ENCODE measurements at regions of chr3 and their contacts with region 1.

Region 1: DNA sequence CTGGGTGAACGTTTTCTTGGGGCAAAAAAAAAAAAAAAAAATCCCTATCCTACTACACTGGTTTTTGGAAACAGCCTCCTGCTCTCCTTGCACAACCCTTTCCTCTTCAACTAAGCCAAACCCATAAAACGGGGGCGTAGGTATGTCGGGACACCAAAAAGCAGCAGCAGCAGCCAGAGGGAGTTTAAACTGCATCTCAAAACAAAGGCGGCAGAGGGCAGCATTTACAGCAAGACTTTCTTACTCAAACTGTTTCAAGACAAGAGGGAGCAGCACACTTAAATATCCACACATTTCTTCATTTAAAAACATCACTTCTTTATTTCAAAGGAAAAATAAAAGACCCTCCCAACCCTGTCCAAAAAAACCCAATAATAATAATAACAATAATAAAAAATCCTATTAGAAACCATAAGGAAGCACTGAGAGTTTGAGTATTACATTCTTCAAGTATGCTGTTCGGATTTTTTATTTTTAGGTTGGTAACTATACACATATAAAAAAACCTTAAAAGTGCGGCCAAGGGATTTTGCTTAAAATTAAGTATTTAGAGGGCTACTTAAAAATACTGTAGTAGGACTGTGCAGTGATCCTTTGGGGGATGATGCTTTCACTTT is 43.9 kb upstream of the PLXND1 start:
- DNase-seq: peak; percentile 84
- H3K4me3 Mint-ChIP-seq: no peak overlapping the region
- H3K27ac Mint-ChIP-seq: peak overlapping the region; percentile 63
- H3K4me1 Mint-ChIP-seq: peaks cover 42% of the 10 kb centered on the region
- H3K27me3 Mint-ChIP-seq: no peaks in the 10 kb centered on the region
- CTCF ChIP-seq: peak; percentile 83

Region 2: GRCh38 chr3:129732200-129732876 is 82.0 kb after region 1 on chr3:
- CTCF ChIA-PET with region 1: no interaction called
- intact Hi-C with region 1: loop called (anchors 5 kb)
- DNase-seq: no peak
- H3K4me3 Mint-ChIP-seq: no peak overlapping the region
- H3K27ac Mint-ChIP-seq: peak overlapping the region; percentile 5
- H3K4me1 Mint-ChIP-seq: peaks cover 21% of the 10 kb centered on the region
- H3K27me3 Mint-ChIP-seq: no peaks in the 10 kb centered on the region
- CTCF ChIP-seq: no peak

Measured in Calu3 (cell line).